H1 (cell line): ENCODE measurements at regions of chr5 and their contacts with region 1.

Region 1: GRCh38 chr5:160271396-160271795 is 41.0 kb downstream of the CCNJL start:
- DNase-seq: no peak
- H3K4me3 ChIP-seq: no peak overlapping the region
- H3K27ac ChIP-seq: 0 out of 2 replicates have a peak overlapping the region, but pooled peaks have one; percentile 10
- H3K4me1 ChIP-seq: peaks cover 7 to 22% (median 16%) of the 10 kb centered on the region in 4 experiments
- H3K27me3 ChIP-seq: no peaks in the 10 kb centered on the region
- CTCF ChIP-seq: no peak
- EP300 ChIP-seq: no peak
- POLR2A ChIP-seq: no peak
- RAD21 ChIP-seq: no peak

Region 2: GRCh38 chr5:160287378-160288051 is 16.1 kb after region 1 on chr5:
- CTCF ChIA-PET with region 1: interaction called, 10 read pairs
- POLR2A ChIA-PET with region 1: interaction called, 12 read pairs
- DNase-seq: peak; percentile 81 to 91
- H3K4me3 ChIP-seq: peak overlapping the region in 1 of 4 experiments; percentile 36; a peak in 2 of 8 replicates
- H3K27ac ChIP-seq: peak overlapping the region; percentile 86
- H3K4me1 ChIP-seq: peaks cover 11 to 37% (median 22%) of the 10 kb centered on the region in 4 experiments
- H3K27me3 ChIP-seq: no peaks in the 10 kb centered on the region
- CTCF ChIP-seq: no peak
- EP300 ChIP-seq: peak in 1 of 2 experiments; percentile 85; a peak in 1 of 3 replicates
- POLR2A ChIP-seq: peak; percentile 54 to 64; a peak in 1 of 3 replicates
- RAD21 ChIP-seq: peak in 1 of 2 experiments; percentile 22; a peak in 1 of 4 replicates

Region 3: DNA sequence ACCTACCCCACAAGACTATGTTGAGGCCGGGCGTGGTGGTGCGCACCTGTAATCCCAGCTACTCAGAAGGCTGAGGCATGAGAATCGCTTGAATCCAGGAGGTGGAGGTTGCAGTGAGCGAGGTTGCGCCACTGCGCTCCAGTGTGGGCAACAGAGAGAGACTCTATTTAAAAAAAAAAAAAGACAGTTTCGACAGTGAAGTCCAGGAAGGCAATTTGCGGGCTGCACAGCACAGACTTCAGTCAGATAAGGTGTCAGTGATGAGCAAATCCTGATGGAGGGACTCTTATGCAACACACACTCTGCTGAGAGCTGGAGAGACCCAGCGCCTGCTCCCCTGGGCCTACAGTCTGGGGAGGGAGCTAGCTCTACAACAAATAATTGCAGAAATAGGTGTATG is 26.8 kb after region 1 on chr5:
- CTCF ChIA-PET with region 1: interaction called, 11 read pairs
- POLR2A ChIA-PET with region 1: interaction called, 5 read pairs
- DNase-seq: no peak
- H3K4me3 ChIP-seq: no peak overlapping the region
- H3K27ac ChIP-seq: no peak overlapping the region
- H3K4me1 ChIP-seq: peaks cover 6 to 16% (median 14%) of the 10 kb centered on the region in 4 experiments
- H3K27me3 ChIP-seq: no peaks in the 10 kb centered on the region
- CTCF ChIP-seq: no peak
- EP300 ChIP-seq: no peak
- POLR2A ChIP-seq: no peak
- RAD21 ChIP-seq: no peak

Region 4: GRCh38 chr5:160312134-160312959 is 41.0 kb after region 1 on chr5 and contains the start of gene CCNJL:
- CTCF ChIA-PET with region 1: interaction called, 4 read pairs
- POLR2A ChIA-PET with region 1: interaction called, 11 read pairs
- DNase-seq: peak in 1 of 2 experiments; percentile 92
- H3K4me3 ChIP-seq: peak within 1 kb of the TSS; percentile 87 to 93 (median 92)
- H3K27ac ChIP-seq: peak within 1 kb of the TSS; percentile 43; the same call in 1 of the 2 replicates
- H3K4me1 ChIP-seq: peaks cover 4 to 7% (median 6%) of the 10 kb centered on the region in 4 experiments; a peak in 5 of 7 replicates
- H3K27me3 ChIP-seq: no peaks in the 10 kb centered on the region
- CTCF ChIP-seq: no peak
- EP300 ChIP-seq: no peak
- POLR2A ChIP-seq: peak in 1 of 2 experiments; percentile 61; a peak in 2 of 3 replicates
- RAD21 ChIP-seq: no peak; a peak in 1 of 4 replicates
- total RNA-seq, gene CCNJL: 34.6 and 36.2 TPM in 2 replicates